Posterior vena cava (tissue), 2 donors: ENCODE measurements at regions of chr4 and their contacts with region 1.

Region 1: GRCh38 chr4:96035727-96036126 is 195.8 kb downstream of the PDHA2 start:
- DNase-seq: no peak

Region 2: DNA sequence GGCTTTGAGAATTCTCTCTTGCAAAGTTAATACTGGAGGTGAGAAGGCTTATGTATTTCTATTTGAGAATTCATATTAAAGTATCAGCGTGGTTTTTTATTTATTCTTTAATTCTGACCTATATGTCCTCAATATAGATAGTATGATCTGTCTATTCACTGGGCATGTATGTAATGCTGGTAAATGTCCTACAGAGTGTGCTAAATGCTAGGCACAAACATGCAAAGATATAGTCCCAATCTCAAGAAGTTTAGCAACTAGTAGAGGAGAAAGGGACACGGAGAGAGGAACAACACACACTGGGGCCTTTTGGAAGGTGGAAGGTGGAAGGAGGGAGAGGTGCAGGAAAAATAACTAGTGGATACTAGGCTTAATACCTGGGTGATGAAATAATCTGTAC is 1289.0 kb before region 1 on chr4:
- intact Hi-C with region 1: loop called in 1 of 2 experiments (anchors 5 kb)
- DNase-seq: no peak

Region 3: GRCh38 chr4:96519291-96519690 is 483.6 kb after region 1 on chr4:
- intact Hi-C with region 1: no loop called
- DNase-seq: no peak